Psoas muscle (tissue), 8 donors: ENCODE measurements at regions of chrX and their contacts with region 1.

Region 1: GRCh38 chrX:323721-324628 is 5.4 kb upstream of the GTPBP6 start:
- DNase-seq: peak; percentile 27 to 64
- ATAC-seq: peak in 3 of 4 donors; percentile 9 to 41 (median 29)
- H3K4me3 ChIP-seq: no peak overlapping the region
- H3K27ac ChIP-seq: no peak overlapping the region
- H3K4me1 ChIP-seq: no peaks in the 10 kb centered on the region
- H3K27me3 ChIP-seq: peaks cover 0 to 11% (median 5%) of the 10 kb centered on the region in 3 donors
- CTCF ChIP-seq: no peak

Region 2: DNA sequence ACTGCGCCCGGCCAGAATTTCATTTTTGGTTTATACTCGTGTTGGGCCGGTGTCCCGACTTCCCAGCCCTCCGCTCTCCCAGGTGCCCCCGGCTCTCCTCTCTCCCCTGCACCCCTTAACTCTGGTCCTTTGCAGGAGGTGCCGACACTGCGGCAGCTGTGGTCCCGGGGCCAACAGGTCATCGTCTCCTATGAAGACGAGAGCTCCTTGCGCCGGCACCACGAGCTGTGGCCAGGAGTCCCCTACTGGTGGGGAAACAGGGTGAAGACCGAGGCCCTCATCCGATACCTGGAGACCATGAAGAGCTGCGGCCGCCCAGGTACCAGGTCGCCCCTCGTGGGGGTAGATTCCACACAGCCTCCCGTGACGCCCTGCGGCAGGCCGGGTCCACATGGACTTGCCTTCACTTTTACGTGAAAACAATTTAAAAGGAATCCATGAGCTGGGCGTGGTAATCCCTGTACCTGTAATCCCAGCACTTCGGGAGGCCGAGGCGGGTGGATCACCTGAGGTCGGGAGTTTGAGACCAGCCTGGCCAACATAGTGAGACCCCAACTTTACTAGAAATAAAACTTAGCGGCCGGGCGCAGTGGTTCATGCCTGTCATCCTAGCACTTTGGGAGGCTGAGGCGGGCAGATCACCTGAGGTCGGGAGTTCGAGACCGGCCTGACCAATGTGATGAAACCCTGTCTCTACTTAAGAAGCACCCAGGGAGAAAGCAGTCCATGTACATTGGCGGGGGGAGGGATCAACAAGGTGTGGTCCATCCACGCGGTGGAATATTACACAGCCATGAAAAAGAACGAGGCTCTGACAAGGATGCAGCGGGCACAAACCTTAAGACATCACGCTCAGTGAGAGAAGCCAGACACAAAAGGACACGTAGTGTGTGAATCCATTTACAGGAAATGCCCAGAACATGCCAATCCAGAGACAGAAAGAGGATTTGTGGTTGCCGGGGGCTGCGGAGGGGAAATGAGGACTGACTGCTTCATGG is 30.8 kb before region 1 on chrX:
- intact Hi-C with region 1: no loop called
- DNase-seq: no peak
- ATAC-seq: no peak
- H3K4me3 ChIP-seq: no peak overlapping the region
- H3K27ac ChIP-seq: no peak overlapping the region
- H3K4me1 ChIP-seq: no peaks in the 10 kb centered on the region
- H3K27me3 ChIP-seq: no peaks in the 10 kb centered on the region
- CTCF ChIP-seq: no peak

Region 3: DNA sequence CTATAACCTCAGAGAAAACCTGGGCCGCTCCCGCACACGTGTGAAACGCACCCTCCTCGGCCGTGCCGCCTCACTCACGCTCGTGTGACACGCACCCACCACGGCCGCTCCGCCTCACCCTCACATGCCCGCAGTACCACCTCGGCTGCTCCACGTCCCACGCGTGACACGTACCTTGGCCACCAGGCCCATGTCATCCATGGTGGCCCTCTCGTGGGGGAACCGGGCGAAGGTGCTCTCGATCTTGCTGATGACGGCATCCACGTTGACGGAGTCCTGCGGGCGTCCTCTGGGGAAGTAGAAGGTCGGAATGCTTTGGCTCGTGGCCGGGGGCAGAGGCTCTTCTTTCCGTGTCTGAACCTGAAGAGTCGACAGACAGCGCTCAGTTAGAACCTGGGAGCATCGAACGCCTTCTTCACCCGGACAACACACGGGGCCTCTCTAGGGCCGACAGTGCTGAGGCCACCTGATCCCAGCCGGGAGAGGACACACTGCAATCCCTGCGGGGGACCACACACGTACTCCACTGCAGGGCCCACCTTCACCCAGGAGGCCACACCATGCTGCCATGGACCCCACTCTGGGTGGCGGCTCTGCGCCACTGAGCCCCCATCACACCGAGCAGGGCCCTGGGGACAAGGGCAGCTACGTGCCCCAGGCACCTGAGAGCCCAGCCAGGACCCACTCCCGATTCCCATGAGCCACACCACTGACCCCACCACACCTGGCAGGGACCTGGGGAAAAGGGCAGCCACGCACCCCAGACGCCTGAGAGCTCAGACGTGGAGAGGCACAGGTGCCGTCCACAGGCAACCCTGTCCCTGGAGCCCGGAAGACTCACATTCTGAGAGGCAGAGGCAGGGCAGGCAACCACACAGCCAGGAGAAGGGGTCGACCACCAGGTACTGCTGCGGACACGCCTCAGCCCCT is 37.5 kb after region 1 on chrX:
- intact Hi-C with region 1: loop called in 1 of 2 experiments (anchors 5 kb)
- DNase-seq: no peak
- ATAC-seq: peak in 1 of 4 donors; percentile 29
- H3K4me3 ChIP-seq: no peak overlapping the region
- H3K27ac ChIP-seq: no peak overlapping the region
- H3K4me1 ChIP-seq: no peaks in the 10 kb centered on the region
- H3K27me3 ChIP-seq: no peaks in the 10 kb centered on the region
- CTCF ChIP-seq: no peak

Region 4: DNA sequence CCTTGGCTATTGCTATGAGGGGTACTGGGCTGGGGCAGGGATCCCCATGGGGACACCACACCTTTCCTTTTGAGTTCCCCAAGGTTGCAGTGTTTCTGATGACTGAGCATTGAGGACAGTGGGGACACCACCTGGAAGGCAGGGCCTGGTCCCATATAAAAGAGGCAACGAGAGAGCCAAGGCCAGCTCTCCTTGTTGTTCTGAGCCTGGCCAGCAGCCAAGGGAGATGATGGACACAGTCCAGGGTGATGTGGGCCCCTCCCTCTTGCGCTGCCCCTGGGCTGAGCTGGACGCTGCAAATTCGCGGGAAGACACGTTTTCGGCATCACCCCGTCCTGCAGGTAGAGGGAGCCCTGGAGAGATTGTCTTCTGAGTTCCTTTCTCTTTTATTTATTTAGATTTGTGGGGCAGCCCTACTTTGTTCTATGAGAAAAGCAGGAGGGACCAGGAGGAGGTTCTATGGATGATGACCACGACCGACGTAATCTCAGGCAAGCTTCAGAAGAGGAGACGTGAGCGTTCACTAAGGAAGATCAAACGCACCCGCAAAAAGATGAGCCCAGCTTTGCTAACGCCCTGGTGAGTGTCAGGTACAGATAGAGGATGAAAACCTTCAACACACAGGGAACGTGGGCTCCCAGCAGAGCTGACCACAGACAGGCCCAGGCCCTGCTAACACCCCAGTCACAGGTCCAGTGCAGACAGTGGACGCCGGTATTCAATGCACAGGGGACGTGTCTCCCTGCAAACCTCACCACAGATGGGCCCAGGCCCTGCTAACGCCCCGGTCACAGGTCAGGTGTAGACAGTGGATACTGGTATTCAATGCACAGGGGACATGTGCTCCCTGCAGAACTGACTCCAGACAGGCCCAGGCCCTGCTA is 404.0 kb after region 1 on chrX:
- intact Hi-C with region 1: no loop called
- DNase-seq: no peak
- ATAC-seq: no peak
- H3K4me3 ChIP-seq: no peak overlapping the region
- H3K27ac ChIP-seq: no peak overlapping the region
- H3K4me1 ChIP-seq: no peaks in the 10 kb centered on the region
- H3K27me3 ChIP-seq: no peaks in the 10 kb centered on the region
- CTCF ChIP-seq: no peak